ENCODE measurements at regions of chr1 and their contacts with region 1.

Region 1: GRCh38 chr1:167447521-167448136 is 70.7 kb downstream of the CD247 start:
- DNase-seq: peak; percentile 93
- H3K4me3 Mint-ChIP-seq: peak overlapping the region; percentile 53
- H3K27ac Mint-ChIP-seq: peak overlapping the region; percentile 91
- H3K4me1 Mint-ChIP-seq: peaks cover 76% of the 10 kb centered on the region
- H3K27me3 Mint-ChIP-seq: no peaks in the 10 kb centered on the region

Region 2: DNA sequence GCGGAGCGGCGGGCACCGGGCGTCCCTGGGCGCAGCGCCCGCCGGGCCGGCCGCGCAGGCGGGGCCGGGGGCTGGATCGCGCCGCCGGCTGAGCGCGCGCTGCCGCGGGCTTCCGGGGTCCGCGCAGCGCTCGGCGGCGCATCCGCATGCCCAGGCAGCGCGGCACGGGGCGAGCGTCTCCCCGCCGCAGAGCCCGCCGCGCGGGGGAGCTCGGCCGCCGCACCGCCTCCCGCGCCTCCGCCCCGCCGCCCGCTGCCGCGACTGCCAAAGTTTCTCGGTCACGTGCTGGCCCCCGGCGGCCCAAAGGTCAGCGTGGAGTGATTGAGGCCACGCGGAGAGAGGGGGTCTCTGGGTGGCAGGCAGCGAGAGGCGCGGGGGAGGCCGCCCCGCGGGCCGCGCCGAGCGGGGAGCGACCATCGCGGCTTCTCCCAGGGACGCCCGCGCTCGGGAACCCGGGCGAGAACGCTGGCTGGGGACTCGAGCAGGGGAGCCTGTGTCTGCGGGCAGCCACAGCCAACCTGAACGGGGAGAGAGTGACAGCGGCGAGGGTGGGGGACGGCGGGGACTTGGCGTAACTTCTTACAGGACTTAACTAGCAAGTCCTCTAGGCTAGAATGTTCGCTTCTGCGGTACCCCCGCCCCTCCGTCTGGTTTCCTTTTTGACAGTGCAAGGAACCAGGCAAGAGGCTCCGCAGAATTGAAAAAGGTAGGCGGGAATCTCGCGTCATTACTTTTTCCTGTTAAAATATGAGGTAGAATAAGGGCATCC is 472.1 kb before region 1 on chr1 and contains the start of gene ILDR2:
- CTCF ChIA-PET with region 1: no interaction called
- intact Hi-C with region 1: loop called (anchors 5 kb)
- DNase-seq: peak; percentile 84
- H3K4me3 Mint-ChIP-seq: peak within 1 kb of the TSS; percentile 91
- H3K27ac Mint-ChIP-seq: peak within 1 kb of the TSS; percentile 90
- H3K4me1 Mint-ChIP-seq: peaks cover 36% of the 10 kb centered on the region
- H3K27me3 Mint-ChIP-seq: peaks cover 10% of the 10 kb centered on the region
- total RNA-seq, gene ILDR2: 9.1 to 10.5 TPM

Region 3: DNA sequence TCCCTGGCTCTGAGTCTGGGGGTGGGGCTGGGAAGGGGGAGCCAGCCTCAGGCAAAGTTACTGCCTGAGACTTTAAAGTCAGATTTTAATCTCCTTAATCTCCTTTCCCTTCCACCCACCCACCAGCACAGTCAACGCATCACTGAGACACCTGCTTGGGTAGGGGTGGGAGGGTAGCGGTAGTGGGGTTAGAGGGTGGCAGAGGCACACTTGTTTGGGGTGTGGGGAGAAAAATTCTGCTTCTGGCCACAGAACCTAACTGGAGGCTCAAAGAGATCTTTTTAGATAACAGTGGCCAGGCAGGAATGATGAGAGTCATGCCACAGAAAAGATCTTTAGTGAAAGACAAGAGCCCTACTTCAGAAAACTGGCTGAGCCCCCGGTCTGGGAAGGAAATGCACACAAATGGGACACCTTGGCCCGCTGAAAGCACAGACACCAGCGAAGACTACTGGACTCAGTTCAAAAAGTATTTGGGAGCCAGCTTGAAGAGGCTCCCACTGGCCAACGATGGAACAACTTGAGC is 26.6 kb after region 1 on chr1:
- CTCF ChIA-PET with region 1: interaction called, 10 read pairs
- intact Hi-C with region 1: loop called (anchors 2 kb)
- DNase-seq: peak; percentile 48
- H3K4me3 Mint-ChIP-seq: peak overlapping the region; percentile 63
- H3K27ac Mint-ChIP-seq: peak overlapping the region; percentile 79
- H3K4me1 Mint-ChIP-seq: peaks cover 85% of the 10 kb centered on the region
- H3K27me3 Mint-ChIP-seq: no peaks in the 10 kb centered on the region

Region 4: DNA sequence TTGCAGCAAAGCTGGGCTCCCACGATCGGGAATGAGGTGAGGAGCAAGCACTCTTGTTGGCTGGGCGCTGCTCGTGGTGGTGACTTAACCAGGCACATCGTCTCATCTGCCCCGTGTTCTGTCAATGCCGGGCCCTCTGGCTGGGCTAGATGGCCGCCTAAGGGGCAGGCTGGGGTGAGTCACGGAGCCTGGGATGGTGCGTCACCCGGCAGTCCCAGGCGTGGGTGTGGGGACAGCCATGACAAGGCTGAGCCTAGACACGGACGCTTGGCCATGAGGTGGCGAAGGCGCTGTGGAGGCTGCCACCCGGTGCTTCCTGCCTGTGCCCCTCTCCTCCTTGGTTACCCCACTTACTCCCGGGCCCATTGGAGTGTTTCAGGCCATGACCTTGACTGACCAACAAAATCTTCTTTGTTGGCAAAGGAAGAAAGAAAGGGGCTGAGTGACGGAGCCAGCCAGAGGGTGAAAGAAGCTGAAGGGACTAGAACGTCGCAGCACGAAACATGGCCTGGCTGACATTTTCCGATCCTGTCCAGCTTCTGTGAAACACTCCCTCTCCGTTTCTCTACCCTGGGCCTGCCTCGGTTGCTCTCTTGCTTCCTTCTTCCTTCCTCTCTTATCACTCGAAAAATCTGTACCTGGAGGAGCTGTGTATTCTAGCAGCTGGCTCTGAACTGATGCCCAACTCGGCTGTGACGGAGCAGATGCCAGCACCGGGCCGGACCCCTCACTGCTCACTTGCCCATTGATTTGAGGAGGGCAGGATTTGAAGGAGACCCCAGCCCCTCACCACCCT is 70.1 kb after region 1 on chr1:
- CTCF ChIA-PET with region 1: interaction called, 10 read pairs
- intact Hi-C with region 1: loop called (anchors 1 kb)
- DNase-seq: peak; percentile 95
- H3K4me3 Mint-ChIP-seq: peak overlapping the region; percentile 90
- H3K27ac Mint-ChIP-seq: peak overlapping the region; percentile 96
- H3K4me1 Mint-ChIP-seq: peaks cover 25% of the 10 kb centered on the region
- H3K27me3 Mint-ChIP-seq: no peaks in the 10 kb centered on the region

Region 5: DNA sequence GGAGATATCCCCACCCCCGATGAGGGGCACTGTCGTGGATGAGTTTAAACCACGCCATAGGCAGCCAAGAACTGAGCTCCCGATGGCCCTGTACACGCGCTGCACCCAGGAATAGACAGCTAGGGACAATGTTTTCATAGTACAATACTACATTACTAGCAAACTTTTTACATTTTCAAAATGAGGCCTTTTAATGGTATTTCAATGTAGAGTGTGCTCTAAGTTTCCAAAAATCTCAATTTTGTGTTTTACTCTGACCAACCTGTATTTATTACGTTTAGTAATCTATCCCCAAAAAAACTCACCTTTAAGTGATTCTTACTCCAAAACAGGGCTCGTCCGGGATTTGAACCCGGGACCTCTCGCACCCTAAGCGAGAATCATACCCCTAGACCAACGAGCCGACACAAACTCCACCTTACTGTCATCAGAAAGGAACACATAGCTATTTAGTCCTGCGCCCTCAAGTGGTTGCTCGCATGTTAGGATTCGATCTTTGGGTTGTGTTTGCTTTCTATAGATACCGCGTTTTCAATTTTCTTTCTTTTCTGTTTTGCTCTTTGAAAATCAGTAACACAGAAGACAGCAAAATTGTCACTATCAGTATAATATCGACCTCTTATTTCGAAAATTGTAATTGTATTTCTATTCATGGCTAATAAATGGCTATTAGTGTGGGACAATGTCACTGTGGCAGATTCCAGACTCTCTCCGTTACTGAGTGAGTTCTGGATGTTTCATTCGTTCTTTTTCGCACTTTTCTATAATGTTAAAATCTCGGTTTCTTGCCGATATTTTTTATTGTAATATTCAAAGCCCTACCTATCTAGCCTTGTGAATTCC is 267.7 kb after region 1 on chr1:
- CTCF ChIA-PET with region 1: no interaction called
- intact Hi-C with region 1: loop called (anchors 2 kb)
- DNase-seq: peak; percentile 95
- H3K4me3 Mint-ChIP-seq: peak overlapping the region; percentile 79
- H3K27ac Mint-ChIP-seq: peak overlapping the region; percentile 92
- H3K4me1 Mint-ChIP-seq: peaks cover 28% of the 10 kb centered on the region
- H3K27me3 Mint-ChIP-seq: peaks cover 5% of the 10 kb centered on the region

Region 6: GRCh38 chr1:168178638-168179437 is 731.2 kb after region 1 on chr1 and contains the start of gene TIPRL:
- CTCF ChIA-PET with region 1: no interaction called
- intact Hi-C with region 1: loop called (anchors 2 kb)
- DNase-seq: peak; percentile 97
- H3K4me3 Mint-ChIP-seq: no peak within 1 kb of the TSS
- H3K27ac Mint-ChIP-seq: no peak within 1 kb of the TSS
- H3K4me1 Mint-ChIP-seq: peaks cover 7% of the 10 kb centered on the region
- H3K27me3 Mint-ChIP-seq: peaks cover 2% of the 10 kb centered on the region
- total RNA-seq, gene TIPRL: 76.7 to 81.3 TPM